Astrocyte of the cerebellum (primary cell): ENCODE measurements at regions of chr2 and their contacts with region 1.

Region 1: GRCh38 chr2:45643543-45644542 is 7.6 kb upstream of the PRKCE start:
- DNase-seq: no peak
- H3K4me3 ChIP-seq: peak overlapping the region; percentile 57
- CTCF ChIP-seq: peak; percentile 86

Region 2: GRCh38 chr2:45380131-45380836 is 263.6 kb before region 1 on chr2:
- in situ Hi-C with region 1: no loop called
- DNase-seq: no peak
- H3K4me3 ChIP-seq: no peak overlapping the region
- CTCF ChIP-seq: no peak

Region 3: GRCh38 chr2:46364797-46365457 is 721.1 kb after region 1 on chr2:
- in situ Hi-C with region 1: loop called (anchors 25 kb)
- DNase-seq: peak; percentile 57
- H3K4me3 ChIP-seq: no peak overlapping the region
- CTCF ChIP-seq: peak; percentile 76